CD14-positive monocyte (primary cell): ENCODE measurements at regions of chr3 and their contacts with region 1.

Region 1: GRCh38 chr3:194769020-194769643 is 83.4 kb downstream of the FAM43A start:
- DNase-seq: peak; percentile 93 to 95 (median 93)
- H3K4me3 ChIP-seq: peak overlapping the region; percentile 24 to 71 (median 57)
- H3K4me3 Mint-ChIP-seq: peak overlapping the region; percentile 72 to 88
- H3K27ac ChIP-seq: peak overlapping the region in 1 of 2 donors; percentile 22
- H3K27ac Mint-ChIP-seq: peak overlapping the region; percentile 24 to 90 (median 76)
- H3K4me1 ChIP-seq: peaks cover 30 to 39% of the 10 kb centered on the region in 2 donors
- H3K4me1 Mint-ChIP-seq: peaks cover 43% of the 10 kb centered on the region
- H3K27me3 ChIP-seq: no peaks in the 10 kb centered on the region
- H3K27me3 Mint-ChIP-seq: peaks cover 0 to 6% (median 3%) of the 10 kb centered on the region in 3 donors
- CTCF ChIP-seq: no peak

Region 2: DNA sequence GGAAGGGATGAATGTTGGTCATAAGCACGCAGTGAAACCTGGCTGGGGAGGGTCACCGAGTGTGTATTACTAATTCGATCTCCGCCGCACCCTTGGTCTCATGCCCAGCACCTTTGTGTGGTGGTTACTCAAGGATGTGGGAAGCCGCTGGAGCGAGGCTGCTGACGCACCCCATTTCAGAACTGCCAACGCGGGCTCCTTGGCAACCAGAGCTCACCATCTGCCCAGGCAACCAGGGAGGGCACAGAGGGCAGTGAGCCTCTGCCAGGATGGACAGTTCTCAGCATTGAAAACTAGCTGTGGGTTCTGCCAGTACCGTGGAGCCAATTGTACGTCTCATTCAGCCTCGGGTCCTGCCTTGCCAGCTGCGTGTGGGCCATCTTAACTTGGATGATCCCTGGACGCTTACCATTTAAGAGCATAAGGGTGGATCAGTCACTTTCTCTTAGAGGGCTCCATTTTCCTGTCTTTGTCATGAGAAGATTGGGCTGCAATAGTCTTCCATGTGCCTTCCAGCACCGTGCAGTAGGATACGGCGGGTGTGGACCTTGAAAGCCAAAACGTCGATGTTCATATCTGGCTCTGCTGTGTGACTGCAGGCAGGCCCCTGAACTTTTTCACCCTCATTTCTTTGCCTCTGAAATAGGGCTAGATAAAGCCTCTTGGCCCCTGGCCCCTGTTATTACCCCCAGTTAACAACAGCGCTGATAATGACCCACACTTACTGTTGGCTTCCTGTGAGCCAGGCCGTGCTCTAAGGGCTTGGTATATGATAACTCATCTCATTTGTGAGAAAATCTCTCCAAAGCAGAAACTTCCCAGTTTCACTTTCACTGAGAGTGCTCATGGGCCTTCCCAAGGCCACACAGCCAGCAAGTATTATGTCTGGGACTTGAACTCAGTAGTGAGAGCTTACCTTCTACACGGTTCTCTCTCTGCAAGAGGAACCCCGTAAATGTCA is 937.4 kb before region 1 on chr3:
- intact Hi-C with region 1: no loop called
- DNase-seq: peak; percentile 55 to 74 (median 57)
- H3K4me3 ChIP-seq: peak overlapping the region in 1 of 3 experiments; percentile 40
- H3K4me3 Mint-ChIP-seq: peak overlapping the region in 1 of 2 donors; percentile 27
- H3K27ac ChIP-seq: peak overlapping the region; percentile 52 to 75
- H3K27ac Mint-ChIP-seq: peak overlapping the region; percentile 70 to 88 (median 79)
- H3K4me1 ChIP-seq: peaks cover 20 to 22% of the 10 kb centered on the region in 2 donors
- H3K4me1 Mint-ChIP-seq: peaks cover 22% of the 10 kb centered on the region
- H3K27me3 ChIP-seq: no peaks in the 10 kb centered on the region
- H3K27me3 Mint-ChIP-seq: peaks cover 2 to 4% (median 2%) of the 10 kb centered on the region in 3 donors
- CTCF ChIP-seq: no peak

Region 3: DNA sequence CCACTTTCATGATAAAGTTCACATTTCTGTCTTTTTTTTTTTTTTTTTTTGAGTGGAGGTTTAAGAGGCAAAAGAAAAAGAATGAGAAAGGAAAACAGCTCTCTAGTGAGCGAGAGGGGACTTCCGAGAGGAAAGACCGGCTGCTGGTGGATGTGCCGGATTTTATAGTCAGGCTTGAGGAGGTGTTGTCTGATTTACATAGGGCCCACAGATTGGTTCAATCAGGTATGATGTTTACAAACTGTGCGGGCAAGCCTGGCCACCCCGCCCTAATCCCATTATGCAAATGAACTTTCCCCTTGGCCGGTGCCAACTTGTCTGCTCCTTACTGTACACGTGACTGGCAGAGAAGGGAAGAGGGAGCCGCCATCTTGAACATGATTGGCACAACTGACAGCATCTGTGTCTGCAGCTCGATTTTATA is 38.8 kb before region 1 on chr3:
- intact Hi-C with region 1: loop called in 1 of 2 experiments (anchors 5 kb)
- DNase-seq: no peak
- H3K4me3 ChIP-seq: no peak overlapping the region
- H3K4me3 Mint-ChIP-seq: no peak overlapping the region
- H3K27ac ChIP-seq: no peak overlapping the region
- H3K27ac Mint-ChIP-seq: no peak overlapping the region
- H3K4me1 ChIP-seq: no peaks in the 10 kb centered on the region
- H3K4me1 Mint-ChIP-seq: peaks cover 7% of the 10 kb centered on the region
- H3K27me3 ChIP-seq: no peaks in the 10 kb centered on the region
- H3K27me3 Mint-ChIP-seq: peaks cover 5 to 7% (median 6%) of the 10 kb centered on the region in 3 donors
- CTCF ChIP-seq: no peak

Region 4: GRCh38 chr3:194738254-194739093 is 30.7 kb before region 1 on chr3:
- intact Hi-C with region 1: loop called (anchors 2 to 5 kb)
- DNase-seq: no peak
- H3K4me3 ChIP-seq: no peak overlapping the region
- H3K4me3 Mint-ChIP-seq: no peak overlapping the region
- H3K27ac ChIP-seq: peak overlapping the region; percentile 22 to 88
- H3K27ac Mint-ChIP-seq: peak overlapping the region in 3 of 7 donors; percentile 9 to 50 (median 46)
- H3K4me1 ChIP-seq: peaks cover 9 to 11% of the 10 kb centered on the region in 2 donors
- H3K4me1 Mint-ChIP-seq: no peaks in the 10 kb centered on the region
- H3K27me3 ChIP-seq: no peaks in the 10 kb centered on the region
- H3K27me3 Mint-ChIP-seq: peaks cover 0 to 1% (median 0%) of the 10 kb centered on the region in 3 donors
- CTCF ChIP-seq: no peak

Region 5: GRCh38 chr3:194939949-194940770 is 171.0 kb after region 1 on chr3:
- intact Hi-C with region 1: loop called in 1 of 2 experiments (anchors 10 kb)
- DNase-seq: peak in 1 of 3 donors; percentile 19
- H3K4me3 ChIP-seq: no peak overlapping the region
- H3K4me3 Mint-ChIP-seq: peak overlapping the region in 1 of 2 donors; percentile 31
- H3K27ac ChIP-seq: no peak overlapping the region
- H3K27ac Mint-ChIP-seq: no peak overlapping the region
- H3K4me1 ChIP-seq: peaks cover 53 to 64% of the 10 kb centered on the region in 2 donors
- H3K4me1 Mint-ChIP-seq: peaks cover 60% of the 10 kb centered on the region
- H3K27me3 ChIP-seq: no peaks in the 10 kb centered on the region
- H3K27me3 Mint-ChIP-seq: peaks cover 0 to 4% (median 1%) of the 10 kb centered on the region in 3 donors
- CTCF ChIP-seq: no peak